Gastrocnemius medialis (tissue), 4 donors: ENCODE measurements at regions of chr12 and their contacts with region 1.

Region 1: DNA sequence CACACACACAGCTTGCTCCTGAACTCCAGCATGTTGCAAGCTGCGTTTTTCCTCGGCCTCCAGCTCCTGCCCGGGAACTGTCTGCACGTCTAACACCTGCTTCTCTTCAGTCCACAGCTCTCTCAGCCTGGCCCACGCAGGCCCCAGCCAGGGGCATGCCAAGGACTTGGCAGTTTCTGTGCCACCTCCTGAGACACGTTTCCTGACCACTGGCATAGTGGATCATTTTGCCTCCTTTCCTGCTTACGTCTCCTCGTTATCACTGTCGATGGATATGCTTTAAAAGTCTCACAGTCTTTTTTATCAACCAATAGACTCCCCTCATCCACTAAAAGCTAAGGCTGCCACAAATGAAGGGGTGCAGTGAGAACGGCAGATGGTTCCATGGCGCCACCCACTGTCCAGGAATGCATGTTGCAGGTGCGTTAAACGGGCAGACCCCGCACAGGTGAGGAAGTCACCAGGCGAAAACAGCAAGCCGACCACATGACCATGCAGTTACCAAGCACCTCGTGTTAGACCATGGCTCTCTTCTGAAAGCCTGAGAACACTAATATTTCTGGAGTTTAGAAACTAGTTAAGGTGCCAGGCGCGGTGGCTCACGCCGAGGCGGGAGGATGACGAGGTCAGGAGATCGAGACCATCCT is 14.7 kb upstream of the TEAD4 start:
- DNase-seq: peak in 1 of 2 donors; percentile 69
- ATAC-seq: peak; percentile 74 to 87
- H3K4me3 ChIP-seq: no peak overlapping the region
- H3K27ac ChIP-seq: peak overlapping the region; percentile 3 to 70 (median 34)
- H3K4me1 ChIP-seq: no peaks in the 10 kb centered on the region
- H3K27me3 ChIP-seq: no peaks in the 10 kb centered on the region
- CTCF ChIP-seq: peak; percentile 77 to 89 (median 87)
- POLR2A ChIP-seq: no peak

Region 2: GRCh38 chr12:2853626-2854025 is 90.9 kb before region 1 on chr12:
- in situ Hi-C with region 1: no loop called
- intact Hi-C with region 1: loop called (anchors 1 kb)
- DNase-seq: peak; percentile 53 to 72
- ATAC-seq: peak; percentile 51 to 70
- H3K4me3 ChIP-seq: no peak overlapping the region
- H3K27ac ChIP-seq: no peak overlapping the region
- H3K4me1 ChIP-seq: peaks cover 5 to 12% of the 10 kb centered on the region in 2 donors
- H3K27me3 ChIP-seq: no peaks in the 10 kb centered on the region
- CTCF ChIP-seq: peak; percentile 71 to 90 (median 77)
- POLR2A ChIP-seq: no peak

Region 3: GRCh38 chr12:2877047-2877952 is 67.2 kb before region 1 on chr12 and contains the starts of genes FOXM1 and RHNO1:
- in situ Hi-C with region 1: loop called in 3 of 4 experiments (anchors 10 kb)
- intact Hi-C with region 1: no loop called
- DNase-seq: peak; percentile 84 to 87
- ATAC-seq: peak; percentile 95 to 96
- H3K4me3 ChIP-seq: peak within 1 kb of the TSS; percentile 75 to 95 (median 91)
- H3K27ac ChIP-seq: peak within 1 kb of the TSS; percentile 82 to 87 (median 86)
- H3K4me1 ChIP-seq: peaks cover 0 to 11% of the 10 kb centered on the region in 2 donors
- H3K27me3 ChIP-seq: no peaks in the 10 kb centered on the region
- CTCF ChIP-seq: peak in 4 of 5 experiments; percentile 17 to 34 (median 24)
- POLR2A ChIP-seq: peak; percentile 39 to 46
- total RNA-seq, gene FOXM1: 0.95 to 1.1 TPM in 2 of 4 donors, not detected in the others
- total RNA-seq, gene RHNO1: 4.9 to 11.8 (median 6.7) TPM

Region 4: DNA sequence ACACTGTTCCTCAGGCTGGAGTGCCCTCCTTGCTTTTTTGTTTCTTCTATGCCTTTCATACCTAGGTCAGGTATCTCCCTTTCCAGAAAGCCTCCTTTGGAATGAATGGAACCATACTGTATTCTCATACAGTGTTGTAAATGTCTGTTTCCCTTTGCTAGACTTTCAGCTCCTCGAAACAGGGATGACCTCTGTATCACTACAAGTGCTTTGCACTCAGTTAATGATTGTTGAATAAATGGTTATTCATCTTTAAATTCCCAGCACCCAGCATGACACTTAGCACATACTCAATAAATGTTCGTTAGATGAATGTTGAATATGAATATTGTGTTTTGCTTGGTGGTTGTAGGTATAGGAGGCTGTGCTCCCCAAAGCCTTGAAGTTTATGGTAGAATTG is 59.7 kb before region 1 on chr12:
- in situ Hi-C with region 1: loop called in 3 of 4 experiments (anchors 10 kb)
- intact Hi-C with region 1: loop called (anchors 1 kb)
- DNase-seq: no peak
- ATAC-seq: no peak
- H3K4me3 ChIP-seq: no peak overlapping the region
- H3K27ac ChIP-seq: no peak overlapping the region
- H3K4me1 ChIP-seq: no peaks in the 10 kb centered on the region
- H3K27me3 ChIP-seq: no peaks in the 10 kb centered on the region
- CTCF ChIP-seq: no peak
- POLR2A ChIP-seq: no peak

Region 5: DNA sequence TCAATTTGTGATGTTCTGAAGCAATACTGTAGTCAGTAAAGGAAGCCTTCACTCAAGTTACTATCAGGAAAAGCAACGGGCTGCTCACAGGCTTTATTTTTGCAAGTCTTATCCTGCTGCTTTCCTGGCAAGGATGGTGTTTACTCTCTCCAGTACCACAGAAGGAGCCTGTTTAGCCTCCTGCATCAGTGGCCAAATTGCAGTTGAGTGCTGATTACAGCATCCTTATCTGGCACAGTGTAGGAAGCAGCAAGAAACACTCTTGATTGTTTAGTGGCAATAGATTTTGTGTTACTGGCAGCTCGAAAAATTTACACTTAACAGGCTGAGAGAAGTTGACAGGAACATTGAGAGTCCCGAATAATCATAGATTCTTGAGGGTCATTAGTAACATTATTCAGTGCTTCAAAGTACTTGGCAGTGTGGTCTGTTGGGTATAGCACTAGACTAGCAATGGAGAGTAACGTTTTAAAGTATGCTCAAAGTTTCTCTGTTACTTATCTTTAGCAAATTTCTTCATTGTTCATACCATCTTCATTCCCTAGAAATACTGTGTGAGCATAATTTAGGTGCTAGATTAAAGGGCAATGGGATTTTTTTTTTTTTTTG is 42.1 kb before region 1 on chr12:
- in situ Hi-C with region 1: no loop called
- intact Hi-C with region 1: no loop called
- DNase-seq: no peak
- ATAC-seq: peak; percentile 87 to 89
- H3K4me3 ChIP-seq: no peak overlapping the region
- H3K27ac ChIP-seq: peak overlapping the region in 2 of 4 donors; percentile 2 to 24
- H3K4me1 ChIP-seq: peaks cover 10 to 15% of the 10 kb centered on the region in 2 donors
- H3K27me3 ChIP-seq: no peaks in the 10 kb centered on the region
- CTCF ChIP-seq: no peak
- POLR2A ChIP-seq: no peak